Heart right ventricle (tissue), 16 donors: ENCODE measurements at regions of chr1 and their contacts with region 1.

Region 1: DNA sequence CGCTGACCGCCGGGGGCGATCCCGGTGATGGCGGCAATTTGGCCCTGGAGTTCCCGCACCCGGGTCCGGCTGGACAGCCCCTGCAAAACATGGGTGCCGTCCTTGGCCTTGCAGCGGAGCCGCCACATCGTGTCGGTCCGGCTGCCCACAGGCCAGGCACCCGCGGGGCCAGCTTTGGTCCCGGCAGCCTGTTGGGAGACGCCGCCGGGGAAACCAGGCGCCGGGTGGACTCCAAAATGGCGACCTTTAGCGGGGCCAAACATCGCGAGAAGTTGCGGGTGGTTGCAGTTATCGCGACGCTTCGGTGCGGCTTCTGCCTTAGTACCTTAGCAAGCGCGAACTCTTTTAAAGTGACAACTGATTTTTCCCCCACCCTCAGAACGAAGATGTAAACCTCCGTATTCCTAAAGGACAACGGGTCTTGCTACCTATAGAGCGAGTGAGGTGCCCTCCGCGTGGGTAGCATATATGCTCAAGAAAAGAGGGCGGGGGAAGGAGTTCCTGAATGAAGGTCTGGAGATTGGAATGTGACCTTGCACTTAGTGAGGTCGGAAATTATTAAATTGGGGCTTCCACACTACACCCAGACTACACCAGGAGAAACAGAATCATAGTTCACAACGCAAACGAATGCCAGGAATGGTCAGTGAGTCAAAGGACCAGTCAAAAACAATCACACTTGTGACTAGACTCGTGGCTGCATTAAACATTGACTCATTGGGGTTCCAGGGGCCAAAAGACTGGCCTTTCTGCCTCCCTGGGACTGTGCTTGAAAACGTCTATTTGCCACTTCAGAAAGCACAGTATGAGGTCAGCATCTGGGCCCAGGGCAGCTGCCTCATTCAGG is at the start of gene YOD1:
- DNase-seq: peak; percentile 91 to 94
- ATAC-seq: peak; percentile 64 to 83 (median 76)
- H3K4me3 ChIP-seq: peak within 1 kb of the TSS; percentile 78 to 99 (median 93)
- H3K27ac ChIP-seq: peak within 1 kb of the TSS; percentile 78 to 94 (median 92)
- H3K4me1 ChIP-seq: peaks cover 8 to 76% (median 59%) of the 10 kb centered on the region in 9 donors
- H3K27me3 ChIP-seq: no peaks in the 10 kb centered on the region
- CTCF ChIP-seq: no peak
- total RNA-seq, gene YOD1: 4.1 to 9.1 (median 5.9) TPM

Region 2: GRCh38 chr1:207077470-207078377 is 26.7 kb after region 1 on chr1:
- intact Hi-C with region 1: loop called in 2 of 10 experiments (anchors 1 to 2 kb)
- DNase-seq: peak in 1 of 2 donors; percentile 74
- ATAC-seq: peak; percentile 62 to 86 (median 80)
- H3K4me3 ChIP-seq: no peak overlapping the region
- H3K27ac ChIP-seq: peak overlapping the region in 5 of 10 donors; percentile 12 to 69 (median 42)
- H3K4me1 ChIP-seq: peaks cover 0 to 58% (median 21%) of the 10 kb centered on the region in 9 donors
- H3K27me3 ChIP-seq: no peaks in the 10 kb centered on the region
- CTCF ChIP-seq: peak; percentile 71 to 94 (median 88)